Endothelial cell of umbilical vein (primary cell): ENCODE measurements at regions of chr2 and their contacts with region 1.

Region 1: DNA sequence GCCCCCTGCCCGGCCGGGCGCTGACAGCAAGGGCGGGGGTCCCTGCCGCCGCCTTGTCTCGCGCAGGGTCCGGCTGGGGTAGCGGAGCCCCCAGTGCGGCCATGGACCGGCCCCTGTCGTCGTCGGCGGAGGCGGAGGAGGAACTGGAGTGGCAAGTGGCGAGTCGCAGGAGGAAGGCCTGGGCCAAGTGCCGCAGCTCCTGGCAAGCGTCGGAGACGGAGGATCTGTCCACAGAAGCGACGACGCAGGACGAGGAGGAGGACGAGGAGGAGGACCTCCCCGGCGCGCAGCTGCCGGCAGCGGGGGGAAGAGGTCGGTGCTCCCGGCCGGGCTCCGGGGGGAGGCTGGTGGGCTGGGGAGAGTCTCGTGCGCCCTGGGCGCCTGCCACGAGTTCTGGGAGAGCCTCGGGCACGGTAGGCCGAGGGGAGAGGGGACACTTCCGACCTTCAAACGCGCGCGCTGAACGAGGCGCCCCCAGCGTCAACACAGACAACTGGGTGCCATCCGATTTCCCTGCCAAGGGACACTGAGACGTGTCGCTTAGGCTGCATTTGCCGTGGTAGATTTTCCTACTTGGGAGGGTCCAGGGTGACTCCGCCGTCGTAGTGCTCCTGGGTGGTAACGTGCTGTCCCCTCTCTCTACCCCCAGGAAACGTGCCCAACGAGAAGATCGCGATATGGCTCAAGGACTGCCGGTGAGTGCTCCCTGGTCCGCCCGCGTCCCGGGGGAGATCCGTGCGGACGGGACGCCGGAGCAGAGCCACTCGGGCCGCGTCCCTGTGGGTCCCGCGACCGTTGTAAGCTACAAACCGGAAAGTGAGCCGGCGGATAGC is 652 bp downstream of the ITPRID2 start:
- DNase-seq: peak; percentile 82
- H3K4me3 ChIP-seq: peak overlapping the region; percentile 80 to 95 (median 92)
- H3K27ac ChIP-seq: peak overlapping the region; percentile 80
- H3K4me1 ChIP-seq: peaks cover 42% of the 10 kb centered on the region
- H3K27me3 ChIP-seq: no peaks in the 10 kb centered on the region
- CTCF ChIP-seq: peak in 1 of 2 donors; percentile 2
- POLR2A ChIP-seq: peak; percentile 35

Region 2: DNA sequence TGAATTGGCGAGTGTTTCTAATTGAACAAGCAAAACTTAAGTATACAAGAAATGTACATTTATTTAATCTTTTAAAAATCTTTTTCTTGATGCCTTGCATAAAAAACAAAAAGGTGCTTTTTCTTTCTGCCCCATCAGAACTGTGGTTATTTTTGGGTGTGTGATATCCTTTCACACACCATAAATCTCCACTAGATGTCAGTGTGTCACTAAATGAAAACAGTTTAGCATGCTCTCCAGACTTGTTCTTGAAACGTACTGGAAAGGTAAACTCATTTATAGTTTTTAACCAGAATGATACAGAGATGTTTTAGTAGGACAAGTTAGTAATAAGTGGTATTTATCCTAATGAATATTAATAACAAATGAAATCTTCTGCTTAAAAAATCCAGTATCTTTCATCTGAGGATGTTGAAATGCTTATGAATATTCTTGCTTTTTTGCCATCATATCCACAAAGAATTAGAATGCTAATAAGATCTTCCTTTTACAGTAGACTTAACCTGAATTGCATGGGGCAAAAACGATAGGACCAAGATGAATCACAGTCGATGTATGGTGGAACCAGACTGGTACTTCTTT is 815.0 kb before region 1 on chr2:
- CTCF ChIA-PET with region 1: no interaction called
- POLR2A ChIA-PET with region 1: no interaction called
- dilution Hi-C with region 1: no loop called
- intact Hi-C with region 1: loop called (anchors 10 kb)
- DNase-seq: peak; percentile 56
- H3K4me3 ChIP-seq: no peak overlapping the region
- H3K27ac ChIP-seq: no peak overlapping the region
- H3K4me1 ChIP-seq: peaks cover 21% of the 10 kb centered on the region
- H3K27me3 ChIP-seq: no peaks in the 10 kb centered on the region
- CTCF ChIP-seq: peak; percentile 38 to 47
- POLR2A ChIP-seq: no peak

Region 3: DNA sequence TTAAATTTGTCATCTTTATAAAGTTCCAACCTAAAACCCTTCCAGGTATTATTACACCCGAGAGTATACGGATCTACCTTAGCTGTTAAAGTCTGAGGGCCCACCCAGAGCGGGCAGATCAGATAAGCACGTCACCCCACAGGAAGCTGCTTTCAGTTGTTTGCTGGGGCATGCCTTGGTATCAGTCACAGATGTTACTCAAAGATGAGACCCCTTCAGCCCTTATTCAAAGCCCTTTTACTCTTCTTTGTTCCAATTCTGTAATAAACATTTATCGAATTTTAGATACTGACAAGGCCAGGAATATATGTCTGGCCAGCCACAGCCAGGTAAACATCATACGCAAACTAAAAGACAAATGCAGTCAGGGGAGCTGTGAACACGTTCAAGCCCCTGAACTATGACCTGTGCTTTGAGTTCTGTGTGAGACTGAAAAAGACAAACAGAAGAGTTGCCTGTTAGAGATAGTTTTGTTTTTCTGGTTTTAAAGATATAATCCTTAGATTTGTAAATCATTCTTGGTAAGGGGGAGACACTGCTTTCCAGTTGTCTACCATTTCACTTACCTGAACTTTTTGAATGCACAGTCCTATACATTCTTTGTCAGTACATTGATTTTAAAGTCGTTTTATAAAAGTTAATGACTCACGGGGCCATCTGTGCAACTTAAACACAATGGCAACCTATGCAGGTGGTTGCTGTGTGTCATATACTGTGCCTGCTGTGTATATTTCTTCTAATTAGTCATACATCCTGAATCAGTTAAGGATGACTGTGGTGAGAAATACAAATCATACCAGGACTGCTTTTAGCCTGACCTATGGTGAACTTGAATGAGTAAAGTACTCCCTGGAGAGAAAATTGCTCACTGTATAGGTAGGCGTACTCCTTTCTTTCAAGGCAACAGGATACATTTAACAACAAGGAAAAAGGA is 101.2 kb before region 1 on chr2:
- CTCF ChIA-PET with region 1: interaction called, 5 read pairs
- POLR2A ChIA-PET with region 1: interaction called, 3 read pairs
- dilution Hi-C with region 1: no loop called
- intact Hi-C with region 1: loop called (anchors 1 kb)
- DNase-seq: peak; percentile 99
- H3K4me3 ChIP-seq: no peak overlapping the region
- H3K27ac ChIP-seq: peak overlapping the region; percentile 96
- H3K4me1 ChIP-seq: peaks cover 45% of the 10 kb centered on the region
- H3K27me3 ChIP-seq: no peaks in the 10 kb centered on the region
- CTCF ChIP-seq: no peak
- POLR2A ChIP-seq: peak; percentile 72

Region 4: GRCh38 chr2:181810823-181811695 is 81.1 kb before region 1 on chr2:
- CTCF ChIA-PET with region 1: interaction called, 3 read pairs
- POLR2A ChIA-PET with region 1: interaction called, 4 read pairs
- dilution Hi-C with region 1: no loop called
- intact Hi-C with region 1: loop called (anchors 1 kb)
- DNase-seq: peak; percentile 99
- H3K4me3 ChIP-seq: peak overlapping the region in 1 of 3 experiments; percentile 18
- H3K27ac ChIP-seq: peak overlapping the region; percentile 93
- H3K4me1 ChIP-seq: peaks cover 61% of the 10 kb centered on the region
- H3K27me3 ChIP-seq: no peaks in the 10 kb centered on the region
- CTCF ChIP-seq: no peak
- POLR2A ChIP-seq: peak; percentile 61

Region 5: DNA sequence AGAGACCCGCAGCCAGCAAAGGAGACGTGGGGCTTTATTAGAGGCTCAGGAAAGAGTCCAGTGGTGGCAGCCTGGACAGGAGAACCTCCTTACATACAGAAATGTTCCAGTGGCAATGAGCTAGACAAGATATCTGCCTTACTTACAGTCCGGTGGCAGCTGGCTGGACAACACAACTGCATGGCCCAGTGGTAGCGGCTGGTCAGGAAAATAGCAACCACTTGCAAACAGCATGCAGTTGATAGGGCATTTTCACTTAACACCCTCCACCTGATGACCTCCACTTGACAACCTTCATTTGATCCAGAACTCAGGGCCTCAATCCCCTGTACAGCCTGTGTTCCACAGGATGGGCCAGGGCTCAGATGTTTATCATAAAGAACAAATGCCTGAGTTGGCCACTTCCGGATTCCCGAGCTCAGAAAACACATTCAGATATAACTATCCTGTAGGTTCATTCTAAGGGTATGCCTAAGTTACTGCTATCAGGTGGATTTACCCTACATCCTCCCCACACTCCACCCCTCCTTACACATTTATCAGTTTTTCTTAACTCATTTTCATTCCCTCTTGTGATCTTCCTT is 64.0 kb before region 1 on chr2:
- CTCF ChIA-PET with region 1: no interaction called
- POLR2A ChIA-PET with region 1: no interaction called
- dilution Hi-C with region 1: no loop called
- intact Hi-C with region 1: no loop called
- DNase-seq: no peak
- H3K4me3 ChIP-seq: no peak overlapping the region
- H3K27ac ChIP-seq: no peak overlapping the region
- H3K4me1 ChIP-seq: no peaks in the 10 kb centered on the region
- H3K27me3 ChIP-seq: no peaks in the 10 kb centered on the region
- CTCF ChIP-seq: no peak
- POLR2A ChIP-seq: no peak

Region 6: GRCh38 chr2:181953881-181954537 is 61.8 kb after region 1 on chr2:
- CTCF ChIA-PET with region 1: interaction called, 3 read pairs
- POLR2A ChIA-PET with region 1: no interaction called
- dilution Hi-C with region 1: no loop called
- intact Hi-C with region 1: loop called (anchors 2 kb)
- DNase-seq: peak; percentile 81
- H3K4me3 ChIP-seq: peak overlapping the region; percentile 33 to 42 (median 39)
- H3K27ac ChIP-seq: peak overlapping the region; percentile 74
- H3K4me1 ChIP-seq: peaks cover 29% of the 10 kb centered on the region
- H3K27me3 ChIP-seq: no peaks in the 10 kb centered on the region
- CTCF ChIP-seq: peak; percentile 47 to 63
- POLR2A ChIP-seq: no peak